ENCODE measurements at regions of chr9 and their contacts with region 1.

Region 1: DNA sequence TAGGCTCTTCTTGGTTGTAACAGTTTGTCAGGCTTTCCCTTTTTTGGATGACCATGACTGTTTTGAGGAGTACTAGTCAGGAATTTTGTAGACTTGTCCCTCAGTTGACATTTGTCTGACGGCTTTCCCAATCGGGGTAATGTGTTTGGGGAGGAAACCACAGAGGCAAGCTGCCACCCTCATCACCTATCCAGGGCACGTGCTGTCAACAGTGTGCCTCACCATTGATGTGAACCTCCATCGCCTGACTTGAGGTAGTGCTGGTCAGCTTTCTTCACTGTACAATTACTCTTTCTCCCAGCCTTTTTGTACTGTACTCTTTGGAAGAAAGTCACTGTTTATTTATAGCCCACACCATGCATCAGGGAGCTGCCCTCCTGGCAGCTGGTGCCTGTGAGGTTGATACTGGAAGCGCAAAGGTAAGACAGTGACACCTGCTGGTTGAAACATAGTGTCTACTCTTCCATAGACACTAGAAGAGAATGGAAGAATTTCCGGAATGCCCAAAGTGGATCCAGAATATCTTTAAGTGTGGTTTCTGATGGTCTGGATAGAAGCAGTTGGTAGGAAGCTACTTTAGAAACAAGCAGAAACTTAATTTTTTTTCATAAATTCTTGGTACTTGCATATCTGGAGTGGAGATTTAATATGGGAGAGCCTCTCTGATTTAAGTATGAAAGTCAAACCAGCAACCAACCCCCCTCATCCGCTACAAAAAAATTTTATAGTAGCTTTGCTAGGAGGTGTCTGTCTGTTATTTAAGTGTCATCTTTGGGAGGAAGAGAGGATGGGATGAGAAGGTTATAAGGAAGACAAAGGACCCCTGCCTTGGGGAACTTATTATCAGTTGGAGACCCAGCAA is 69.3 kb downstream of the SNX30 start:
- DNase-seq: peak; percentile 47 to 69
- ATAC-seq: peak; percentile 98 to 99
- H3K4me3 ChIP-seq: no peak overlapping the region
- H3K27ac ChIP-seq: no peak overlapping the region
- H3K4me1 ChIP-seq: no peaks in the 10 kb centered on the region
- CTCF ChIP-seq: peak; percentile 62
- EP300 ChIP-seq: no peak
- POLR2A ChIP-seq: no peak
- RAD21 ChIP-seq: peak; percentile 60 to 75

Region 2: DNA sequence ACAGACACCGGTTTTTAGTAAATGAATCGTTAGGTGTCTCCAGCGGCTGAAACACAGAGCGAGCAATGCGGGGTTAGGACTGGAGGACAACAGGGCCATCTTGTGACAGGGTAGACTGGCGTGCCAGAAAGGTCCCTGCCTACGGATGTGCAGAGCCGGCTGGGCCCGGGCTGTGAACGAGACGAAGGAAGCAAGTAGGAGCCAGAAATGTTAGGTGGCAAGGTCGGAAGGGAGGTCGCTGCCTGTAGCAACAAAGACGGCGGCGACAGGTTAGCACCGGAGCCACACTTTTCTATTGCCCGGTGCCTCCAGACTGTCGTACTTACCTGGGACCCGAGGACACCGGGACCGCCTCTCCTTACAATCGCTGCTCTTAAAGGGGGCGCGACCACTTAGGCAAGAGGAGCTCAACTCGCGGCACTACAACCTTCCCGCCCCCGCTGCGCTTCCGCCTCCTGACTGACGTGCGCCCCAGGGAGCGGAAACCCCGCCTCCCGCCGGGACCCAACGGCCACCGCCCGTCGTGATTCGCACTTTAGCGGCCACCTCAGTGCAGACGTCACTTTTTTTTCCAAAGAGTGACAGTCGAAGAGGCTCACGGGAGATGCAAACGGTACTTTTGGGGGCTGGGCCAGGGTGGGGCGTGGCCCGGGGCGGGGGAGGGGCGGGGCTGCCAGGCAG is 102.1 kb before region 1 on chr9 and contains the start of gene INIP:
- CTCF ChIA-PET with region 1: interaction called, 10 read pairs
- POLR2A ChIA-PET with region 1: no interaction called
- DNase-seq: peak; percentile 94 to 97
- ATAC-seq: peak; percentile 98
- H3K4me3 ChIP-seq: peak within 1 kb of the TSS; percentile 72
- H3K27ac ChIP-seq: peak within 1 kb of the TSS; percentile 73 to 85
- H3K4me1 ChIP-seq: peaks cover 5% of the 10 kb centered on the region; the same call in 1 of the 3 replicates
- CTCF ChIP-seq: no peak
- EP300 ChIP-seq: no peak
- POLR2A ChIP-seq: peak; percentile 75
- RAD21 ChIP-seq: no peak
- polyA plus RNA-seq, gene INIP: 30.5 and 40.0 TPM in 2 replicates

Region 3: GRCh38 chr9:112809351-112809848 is 10.5 kb before region 1 on chr9:
- CTCF ChIA-PET with region 1: interaction called, 11 read pairs
- POLR2A ChIA-PET with region 1: no interaction called
- DNase-seq: no peak
- ATAC-seq: no peak
- H3K4me3 ChIP-seq: no peak overlapping the region
- H3K27ac ChIP-seq: no peak overlapping the region
- H3K4me1 ChIP-seq: no peaks in the 10 kb centered on the region
- CTCF ChIP-seq: no peak
- EP300 ChIP-seq: no peak
- POLR2A ChIP-seq: no peak
- RAD21 ChIP-seq: no peak

Region 4: DNA sequence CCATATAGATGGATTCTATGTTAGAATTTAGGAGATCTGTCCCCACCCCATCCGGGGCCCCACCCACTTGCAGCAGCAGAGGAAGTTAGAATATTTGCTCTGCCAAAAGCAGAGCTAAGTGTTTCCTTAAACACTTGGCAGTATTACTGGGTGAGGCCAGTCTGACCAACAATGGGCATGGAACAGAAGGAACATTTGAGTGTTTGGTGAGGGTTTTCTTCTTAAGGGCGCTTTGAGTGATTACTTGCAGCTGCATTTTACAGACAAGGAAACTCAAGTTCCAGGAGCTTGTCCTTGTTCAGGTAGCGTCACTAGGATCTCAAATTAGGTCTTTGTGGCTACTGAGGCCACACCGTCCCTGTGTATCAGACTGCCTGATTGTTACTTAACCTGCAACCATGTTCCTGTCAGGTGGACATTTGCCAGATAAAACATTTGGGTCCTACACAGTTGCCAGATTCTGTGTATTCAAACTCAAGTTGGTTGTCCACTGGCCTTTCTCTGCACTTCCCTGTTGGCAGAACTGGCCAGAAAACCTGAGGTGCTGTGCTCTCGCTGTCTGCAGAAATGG is 11.5 kb after region 1 on chr9:
- CTCF ChIA-PET with region 1: interaction called, 15 read pairs
- POLR2A ChIA-PET with region 1: no interaction called
- DNase-seq: no peak
- ATAC-seq: no peak
- H3K4me3 ChIP-seq: no peak overlapping the region
- H3K27ac ChIP-seq: no peak overlapping the region
- H3K4me1 ChIP-seq: no peaks in the 10 kb centered on the region
- CTCF ChIP-seq: no peak
- EP300 ChIP-seq: no peak
- POLR2A ChIP-seq: no peak
- RAD21 ChIP-seq: no peak

Region 5: DNA sequence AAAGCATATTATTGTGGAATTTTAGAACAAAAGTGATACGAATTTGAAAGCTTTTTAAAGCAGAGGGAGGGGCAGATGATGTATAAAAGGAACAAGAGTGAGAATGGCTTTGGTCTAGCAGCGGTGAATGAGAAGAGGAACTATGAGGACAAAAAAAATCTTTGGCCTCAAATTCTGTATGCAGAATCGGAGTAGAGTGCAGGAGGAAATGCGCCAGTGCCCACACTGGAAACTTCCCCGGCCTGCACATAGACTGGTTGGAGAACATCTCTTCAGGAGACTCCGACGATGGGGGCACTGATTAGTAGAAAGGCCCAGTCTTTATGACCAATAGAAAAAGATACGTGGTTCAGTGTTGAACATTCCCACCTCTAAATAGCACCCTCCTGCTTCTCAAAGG is 19.5 kb after region 1 on chr9:
- CTCF ChIA-PET with region 1: interaction called, 10 read pairs
- POLR2A ChIA-PET with region 1: no interaction called
- DNase-seq: no peak
- ATAC-seq: no peak
- H3K4me3 ChIP-seq: no peak overlapping the region
- H3K27ac ChIP-seq: no peak overlapping the region
- H3K4me1 ChIP-seq: no peaks in the 10 kb centered on the region
- CTCF ChIP-seq: no peak
- EP300 ChIP-seq: no peak
- POLR2A ChIP-seq: no peak
- RAD21 ChIP-seq: no peak

Measured in A549 (cell line).